ENCODE measurements at regions of chr1 and their contacts with region 1.

Region 1: DNA sequence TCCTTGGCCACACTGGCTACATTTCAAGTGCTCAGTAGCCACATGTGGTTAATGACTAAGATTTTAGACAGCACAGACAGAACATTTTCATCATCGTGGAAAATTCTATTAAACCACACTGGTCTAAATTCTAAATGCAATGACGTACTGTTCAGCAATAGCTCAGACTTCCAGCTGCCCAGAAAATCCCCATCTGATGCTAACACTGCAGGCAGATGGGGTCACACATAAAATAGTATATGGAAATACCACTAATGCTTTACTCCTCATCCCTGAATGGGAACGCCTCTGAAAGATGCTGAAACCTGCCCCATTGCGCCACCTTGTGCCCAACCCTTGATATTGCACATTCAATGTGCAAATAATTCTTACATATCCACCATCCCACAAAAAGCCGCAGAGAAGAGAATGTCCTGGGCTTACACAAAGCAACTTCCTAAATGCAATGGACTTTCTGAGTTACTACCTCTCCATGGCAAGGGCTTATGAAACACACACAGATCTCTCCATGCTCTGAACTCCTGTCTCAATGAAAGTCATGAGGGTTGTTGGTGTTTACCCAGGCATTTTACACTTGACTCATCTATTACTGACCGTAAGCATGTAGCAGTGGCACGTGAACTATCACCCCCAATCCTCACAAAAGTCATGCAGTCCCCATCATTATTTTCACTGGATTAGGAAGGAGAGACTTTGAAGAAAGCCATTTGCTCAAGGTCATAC is 20.3 kb upstream of the SLC5A9 start:
- DNase-seq: peak; percentile 72
- H3K4me3 ChIP-seq: no peak overlapping the region
- H3K27ac ChIP-seq: no peak overlapping the region
- H3K4me1 ChIP-seq: no peaks in the 10 kb centered on the region
- H3K27me3 ChIP-seq: peaks cover 4% of the 10 kb centered on the region
- CTCF ChIP-seq: peak; percentile 85

Region 2: DNA sequence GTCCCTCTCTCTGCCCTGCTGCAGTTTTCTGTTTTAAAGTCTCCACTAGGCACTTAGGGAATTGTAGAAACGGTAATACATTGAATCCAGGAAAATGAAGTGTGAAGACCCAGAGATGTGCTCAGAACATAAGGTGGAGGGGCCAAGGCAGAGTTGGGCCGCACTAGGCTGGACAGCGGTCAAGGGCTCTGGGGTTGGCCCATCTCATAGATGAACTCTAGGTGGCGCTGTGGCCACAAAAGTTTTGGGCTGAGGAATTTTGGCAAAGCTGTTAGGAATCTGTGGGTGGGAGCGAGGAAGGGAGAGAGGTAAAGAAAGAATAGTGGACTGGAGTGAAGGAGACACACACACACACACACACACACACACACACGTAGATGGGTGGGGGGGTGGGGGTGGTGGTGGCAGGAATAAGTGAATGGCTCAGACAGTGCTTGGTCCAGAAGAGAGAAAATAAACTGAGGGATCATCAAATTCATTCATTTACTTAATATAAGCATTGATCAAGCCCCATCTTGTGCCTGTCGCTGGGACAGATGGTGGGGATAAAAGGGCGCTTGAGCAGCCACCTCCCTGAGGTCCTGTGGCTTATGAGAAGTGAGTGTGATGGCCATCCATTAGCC is 463.5 kb before region 1 on chr1:
- CTCF ChIA-PET with region 1: interaction called, 3 read pairs
- POLR2A ChIA-PET with region 1: no interaction called
- intact Hi-C with region 1: loop called (anchors 1 kb)
- DNase-seq: peak; percentile 61
- H3K4me3 ChIP-seq: no peak overlapping the region
- H3K27ac ChIP-seq: no peak overlapping the region
- H3K4me1 ChIP-seq: no peaks in the 10 kb centered on the region
- H3K27me3 ChIP-seq: peaks cover 39% of the 10 kb centered on the region
- CTCF ChIP-seq: peak; percentile 82

Region 3: DNA sequence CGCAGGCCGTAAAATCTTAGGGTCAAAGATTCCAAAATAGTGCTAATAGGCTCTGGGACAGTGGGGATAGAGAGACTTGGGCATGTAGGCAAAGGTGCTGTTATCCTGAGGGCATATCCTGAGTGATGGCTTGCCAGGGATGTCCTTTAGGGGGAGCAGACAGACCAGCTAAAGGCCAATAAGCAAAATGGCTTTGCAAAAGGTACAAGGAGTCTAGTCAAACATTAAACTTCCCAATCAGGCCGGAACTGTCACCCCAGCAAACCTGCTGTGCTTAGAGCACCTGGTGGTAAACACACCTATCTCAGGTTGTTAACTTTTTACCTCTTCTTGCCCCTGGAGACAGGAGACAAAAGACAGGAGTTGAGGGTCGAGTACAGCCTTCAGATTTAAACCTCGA is 254.1 kb before region 1 on chr1:
- CTCF ChIA-PET with region 1: no interaction called
- POLR2A ChIA-PET with region 1: no interaction called
- intact Hi-C with region 1: loop called (anchors 5 kb)
- DNase-seq: peak; percentile 12
- H3K4me3 ChIP-seq: no peak overlapping the region
- H3K27ac ChIP-seq: no peak overlapping the region
- H3K4me1 ChIP-seq: no peaks in the 10 kb centered on the region
- H3K27me3 ChIP-seq: peaks cover 25% of the 10 kb centered on the region
- CTCF ChIP-seq: peak; percentile 38

Region 4: DNA sequence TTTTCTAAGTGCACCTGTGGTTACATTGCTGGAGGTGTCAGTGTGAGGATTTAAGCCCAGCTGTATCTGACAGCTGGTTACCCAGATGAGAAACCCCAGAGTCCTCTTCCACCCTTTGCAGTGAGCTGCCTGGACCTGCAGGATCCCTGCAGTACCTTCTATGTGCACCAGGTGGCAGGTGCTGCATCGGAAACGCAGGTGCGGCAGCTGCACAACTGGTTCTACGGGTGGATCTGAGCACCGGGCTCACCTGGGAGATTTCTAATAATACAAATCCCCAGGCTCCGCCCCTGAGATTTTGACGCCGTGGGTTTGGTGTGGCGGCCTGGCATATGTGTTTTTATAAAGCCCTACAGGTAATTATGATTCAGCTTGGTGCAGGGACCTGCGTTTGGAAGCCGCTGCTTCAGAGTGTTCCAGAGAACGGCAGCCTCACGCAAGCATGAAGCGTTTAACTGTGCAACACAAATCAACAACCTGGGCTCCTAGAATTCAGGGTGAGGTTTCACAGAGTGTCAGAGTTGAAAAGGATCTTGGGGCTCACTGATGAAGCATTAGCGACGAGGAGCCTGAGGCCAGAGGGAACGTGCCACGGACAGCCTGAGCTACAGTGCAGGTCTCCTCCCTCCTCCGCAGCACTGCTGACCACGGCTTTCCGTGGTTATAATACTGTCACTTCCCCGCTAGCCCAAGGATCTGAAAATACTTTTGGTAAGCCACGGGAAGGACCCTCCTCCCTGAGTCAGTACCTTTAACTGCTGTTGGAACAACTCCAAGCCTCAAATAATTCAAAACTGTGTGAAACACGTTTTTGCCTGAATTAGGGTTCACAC is 108.3 kb before region 1 on chr1:
- CTCF ChIA-PET with region 1: no interaction called
- POLR2A ChIA-PET with region 1: no interaction called
- intact Hi-C with region 1: loop called (anchors 5 kb)
- DNase-seq: peak; percentile 61
- H3K4me3 ChIP-seq: no peak overlapping the region
- H3K27ac ChIP-seq: no peak overlapping the region
- H3K4me1 ChIP-seq: no peaks in the 10 kb centered on the region
- H3K27me3 ChIP-seq: peaks cover 73% of the 10 kb centered on the region
- CTCF ChIP-seq: peak; percentile 79

Region 5: GRCh38 chr1:48109390-48110013 is 92.7 kb before region 1 on chr1:
- CTCF ChIA-PET with region 1: interaction called, 10 read pairs
- POLR2A ChIA-PET with region 1: no interaction called
- intact Hi-C with region 1: loop called (anchors 1 kb)
- DNase-seq: peak; percentile 42
- H3K4me3 ChIP-seq: no peak overlapping the region
- H3K27ac ChIP-seq: no peak overlapping the region
- H3K4me1 ChIP-seq: no peaks in the 10 kb centered on the region
- H3K27me3 ChIP-seq: peaks cover 20% of the 10 kb centered on the region
- CTCF ChIP-seq: peak; percentile 79